ENCODE measurements at regions of chr4 and their contacts with region 1.

Region 1: DNA sequence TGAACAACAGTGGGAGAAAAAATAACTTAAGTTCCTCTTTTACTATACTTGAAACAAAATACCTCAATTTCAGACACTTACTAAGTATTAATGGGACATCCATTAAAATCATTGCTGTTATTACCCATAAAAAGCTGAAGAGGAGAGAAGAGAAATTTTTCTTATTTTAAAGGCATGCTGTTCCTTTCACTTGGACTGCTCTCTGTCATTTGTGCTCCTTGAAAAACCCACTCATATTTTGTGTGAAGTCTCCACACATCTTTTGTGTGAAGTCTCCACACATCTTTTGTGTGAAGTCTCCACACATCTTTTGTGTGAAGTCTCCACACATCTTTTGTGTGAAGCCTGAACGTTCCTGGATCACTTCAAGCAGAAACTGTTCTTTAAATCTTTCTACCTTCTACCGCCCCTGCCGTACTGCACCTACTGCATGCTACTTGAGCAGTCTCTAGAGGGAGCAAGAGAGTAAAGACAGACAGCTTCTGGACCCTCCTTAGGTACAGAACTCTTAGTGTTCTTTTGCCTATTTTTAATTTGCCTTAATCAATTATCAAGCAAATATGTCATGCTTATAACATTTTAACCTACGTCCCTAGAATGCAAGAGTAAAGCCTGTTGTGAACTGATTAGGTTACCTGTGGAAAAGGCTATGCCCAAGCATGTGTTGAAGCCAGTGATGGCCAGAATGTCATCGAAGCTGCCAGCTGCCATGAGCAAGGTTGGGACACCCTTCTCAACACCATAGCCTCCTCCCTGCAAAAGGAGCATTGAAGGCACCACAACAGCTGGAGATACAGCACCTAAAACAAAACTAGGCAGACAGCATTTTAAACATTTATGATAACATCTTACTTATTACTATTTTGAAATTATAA is 27.1 kb upstream of the SLC9B1 start:
- DNase-seq: peak; percentile 66
- ATAC-seq: peak; percentile 97
- H3K4me3 ChIP-seq: no peak overlapping the region
- H3K4me3 Mint-ChIP-seq: peak overlapping the region; percentile 54
- H3K27ac ChIP-seq: no peak overlapping the region
- H3K27ac Mint-ChIP-seq: peak overlapping the region; percentile 71
- H3K4me1 ChIP-seq: no peaks in the 10 kb centered on the region
- H3K4me1 Mint-ChIP-seq: peaks cover 9% of the 10 kb centered on the region
- H3K27me3 ChIP-seq: no peaks in the 10 kb centered on the region
- H3K27me3 Mint-ChIP-seq: no peaks in the 10 kb centered on the region
- CTCF ChIP-seq: peak; percentile 92

Region 2: GRCh38 chr4:103075901-103076739 is 29.5 kb after region 1 on chr4:
- CTCF ChIA-PET with region 1: interaction called, 7 read pairs
- POLR2A ChIA-PET with region 1: no interaction called
- intact Hi-C with region 1: loop called (anchors 1 kb)
- DNase-seq: peak; percentile 78
- ATAC-seq: peak; percentile 55
- H3K4me3 ChIP-seq: peak overlapping the region; percentile 65 to 83 (median 80)
- H3K4me3 Mint-ChIP-seq: peak overlapping the region; percentile 82
- H3K27ac ChIP-seq: peak overlapping the region; percentile 92
- H3K27ac Mint-ChIP-seq: peak overlapping the region; percentile 89
- H3K4me1 ChIP-seq: peaks cover 27 to 31% of the 10 kb centered on the region in 2 donors
- H3K4me1 Mint-ChIP-seq: peaks cover 35% of the 10 kb centered on the region
- H3K27me3 ChIP-seq: no peaks in the 10 kb centered on the region
- H3K27me3 Mint-ChIP-seq: no peaks in the 10 kb centered on the region
- CTCF ChIP-seq: peak; percentile 12

Region 3: GRCh38 chr4:103244246-103244645 is 197.6 kb after region 1 on chr4:
- CTCF ChIA-PET with region 1: no interaction called
- POLR2A ChIA-PET with region 1: no interaction called
- intact Hi-C with region 1: no loop called
- DNase-seq: no peak
- ATAC-seq: no peak
- H3K4me3 ChIP-seq: no peak overlapping the region
- H3K4me3 Mint-ChIP-seq: no peak overlapping the region
- H3K27ac ChIP-seq: no peak overlapping the region
- H3K27ac Mint-ChIP-seq: no peak overlapping the region
- H3K4me1 ChIP-seq: no peaks in the 10 kb centered on the region
- H3K4me1 Mint-ChIP-seq: no peaks in the 10 kb centered on the region
- H3K27me3 ChIP-seq: no peaks in the 10 kb centered on the region
- H3K27me3 Mint-ChIP-seq: peaks cover 10% of the 10 kb centered on the region
- CTCF ChIP-seq: no peak